ENCODE measurements at regions of chr19 and their contacts with region 1.

Region 1: DNA sequence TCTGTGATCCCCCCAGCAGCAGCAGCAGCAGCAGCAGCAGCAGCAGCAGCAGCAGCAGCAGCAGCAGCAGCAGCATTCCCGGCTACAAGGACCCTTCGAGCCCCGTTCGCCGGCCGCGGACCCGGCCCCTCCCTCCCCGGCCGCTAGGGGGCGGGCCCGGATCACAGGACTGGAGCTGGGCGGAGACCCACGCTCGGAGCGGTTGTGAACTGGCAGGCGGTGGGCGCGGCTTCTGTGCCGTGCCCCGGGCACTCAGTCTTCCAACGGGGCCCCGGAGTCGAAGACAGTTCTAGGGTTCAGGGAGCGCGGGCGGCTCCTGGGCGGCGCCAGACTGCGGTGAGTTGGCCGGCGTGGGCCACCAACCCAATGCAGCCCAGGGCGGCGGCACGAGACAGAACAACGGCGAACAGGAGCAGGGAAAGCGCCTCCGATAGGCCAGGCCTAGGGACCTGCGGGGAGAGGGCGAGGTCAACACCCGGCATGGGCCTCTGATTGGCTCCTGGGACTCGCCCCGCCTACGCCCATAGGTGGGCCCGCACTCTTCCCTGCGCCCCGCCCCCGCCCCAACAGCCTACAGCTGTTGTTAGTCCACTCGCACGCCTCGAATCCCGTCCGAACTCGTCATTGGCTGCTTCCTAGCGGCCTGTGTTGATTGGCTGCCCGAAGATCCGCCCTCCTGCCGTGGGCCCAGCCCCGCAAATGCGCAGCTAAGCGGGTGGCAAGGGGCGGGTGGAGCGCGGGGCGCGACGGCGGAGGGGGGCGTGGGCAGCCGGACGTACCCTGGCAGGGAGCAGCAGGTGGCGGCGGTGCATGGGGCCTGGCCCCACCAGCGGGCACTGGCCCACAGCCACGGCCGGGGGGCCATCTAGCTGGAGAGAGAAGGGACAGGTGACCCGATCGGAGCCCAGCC is 1.4 kb upstream of the SIX5 start:
- DNase-seq: peak; percentile 98
- H3K4me3 ChIP-seq: peak overlapping the region; percentile 50 to 83 (median 75)
- H3K27ac ChIP-seq: no peak overlapping the region
- H3K4me1 ChIP-seq: peaks cover 33% of the 10 kb centered on the region
- H3K27me3 ChIP-seq: no peaks in the 10 kb centered on the region
- CTCF ChIP-seq: peak; percentile 44 to 93

Region 2: DNA sequence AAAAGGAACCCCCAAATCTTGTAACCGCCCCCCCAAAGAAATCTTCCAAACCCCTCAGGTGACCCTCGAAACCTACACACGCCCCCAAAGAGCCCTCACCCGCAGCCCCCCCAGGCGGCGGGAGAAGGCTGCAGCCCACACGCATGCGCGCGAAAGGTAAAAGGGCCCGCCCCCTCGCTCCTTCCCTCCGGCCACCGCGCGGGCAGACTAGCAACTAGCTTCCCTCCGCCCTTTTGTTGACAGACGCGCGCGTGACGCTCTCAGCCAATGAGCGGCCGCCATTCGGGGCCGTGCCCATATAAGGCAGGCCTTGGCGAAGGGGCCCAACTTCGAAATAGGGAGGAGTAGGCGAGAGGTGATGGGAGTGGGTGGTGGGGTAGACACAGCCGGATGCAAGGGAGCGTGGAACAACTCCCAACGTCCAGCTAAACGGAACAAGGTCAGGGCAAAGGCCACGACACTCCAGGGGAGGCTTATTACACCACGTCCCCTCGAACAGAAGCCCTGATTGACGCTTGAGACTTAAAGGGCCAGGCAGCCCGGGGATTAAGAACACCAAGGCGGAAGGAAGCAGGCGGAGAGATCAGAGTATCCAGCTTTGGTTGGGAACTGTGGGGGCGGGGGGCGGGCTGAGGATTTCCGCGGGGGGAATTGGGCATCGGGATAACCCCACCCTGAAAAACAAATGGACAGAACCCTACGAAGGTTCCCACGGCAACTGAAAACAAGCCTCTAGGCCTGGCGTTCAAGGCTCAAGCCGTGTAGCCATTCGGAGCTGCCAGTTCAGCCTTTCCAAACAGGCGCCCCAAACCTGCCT is 53.1 kb before region 1 on chr19:
- CTCF ChIA-PET with region 1: no interaction called
- dilution Hi-C with region 1: no loop called
- in situ Hi-C with region 1: no loop called
- intact Hi-C with region 1: loop called (anchors 1 kb)
- DNase-seq: peak; percentile 97
- H3K4me3 ChIP-seq: peak overlapping the region; percentile 64 to 91 (median 65)
- H3K27ac ChIP-seq: peak overlapping the region; percentile 87
- H3K4me1 ChIP-seq: peaks cover 23% of the 10 kb centered on the region
- H3K27me3 ChIP-seq: no peaks in the 10 kb centered on the region
- CTCF ChIP-seq: peak; percentile 5 to 29

Region 3: GRCh38 chr19:45753546-45753945 is 16.9 kb before region 1 on chr19:
- CTCF ChIA-PET with region 1: no interaction called
- dilution Hi-C with region 1: no loop called
- in situ Hi-C with region 1: no loop called
- intact Hi-C with region 1: loop called (anchors 2 kb)
- DNase-seq: no peak
- H3K4me3 ChIP-seq: no peak overlapping the region
- H3K27ac ChIP-seq: no peak overlapping the region
- H3K4me1 ChIP-seq: peaks cover 5% of the 10 kb centered on the region
- H3K27me3 ChIP-seq: no peaks in the 10 kb centered on the region
- CTCF ChIP-seq: no peak

Region 4: DNA sequence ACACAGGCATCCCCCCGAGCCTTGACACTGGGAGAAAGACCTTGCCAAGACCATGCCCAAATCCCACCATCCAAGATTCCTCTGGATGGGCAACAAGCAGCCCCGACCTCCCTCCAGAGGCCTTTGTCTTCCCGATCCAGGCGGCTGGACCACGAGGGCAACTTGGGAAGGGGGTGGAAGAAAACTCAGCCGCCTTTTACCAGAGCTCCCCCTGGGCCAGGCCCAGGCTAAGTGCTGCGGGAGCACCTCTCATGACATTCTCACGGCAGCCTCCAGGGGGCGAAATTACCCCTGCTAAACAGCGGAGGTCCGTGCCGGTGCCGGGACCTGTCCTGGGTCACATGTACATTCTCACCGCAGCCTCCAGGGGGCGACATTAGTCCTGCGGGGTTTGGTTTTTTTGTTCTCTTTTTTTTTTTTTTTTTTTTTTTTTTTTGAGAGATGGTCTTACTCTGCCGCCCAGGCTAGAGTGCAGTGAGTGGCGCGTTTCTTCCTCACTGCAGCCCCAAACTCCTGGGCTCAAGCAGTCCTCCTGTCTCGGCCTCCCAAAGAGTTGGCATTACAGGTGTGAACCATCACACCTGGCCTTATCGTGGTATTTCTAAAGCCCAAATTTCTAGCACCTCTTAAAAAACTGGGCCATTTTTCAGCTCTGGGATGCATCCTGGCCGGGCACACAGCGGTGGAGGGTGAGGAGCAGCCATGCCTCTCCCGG is 46.7 kb after region 1 on chr19:
- CTCF ChIA-PET with region 1: interaction called, 12 read pairs
- dilution Hi-C with region 1: no loop called
- in situ Hi-C with region 1: no loop called
- intact Hi-C with region 1: no loop called
- DNase-seq: peak; percentile 75
- H3K4me3 ChIP-seq: no peak overlapping the region
- H3K27ac ChIP-seq: no peak overlapping the region
- H3K4me1 ChIP-seq: peaks cover 14% of the 10 kb centered on the region
- H3K27me3 ChIP-seq: no peaks in the 10 kb centered on the region
- CTCF ChIP-seq: peak; percentile 96 to 98

Region 5: DNA sequence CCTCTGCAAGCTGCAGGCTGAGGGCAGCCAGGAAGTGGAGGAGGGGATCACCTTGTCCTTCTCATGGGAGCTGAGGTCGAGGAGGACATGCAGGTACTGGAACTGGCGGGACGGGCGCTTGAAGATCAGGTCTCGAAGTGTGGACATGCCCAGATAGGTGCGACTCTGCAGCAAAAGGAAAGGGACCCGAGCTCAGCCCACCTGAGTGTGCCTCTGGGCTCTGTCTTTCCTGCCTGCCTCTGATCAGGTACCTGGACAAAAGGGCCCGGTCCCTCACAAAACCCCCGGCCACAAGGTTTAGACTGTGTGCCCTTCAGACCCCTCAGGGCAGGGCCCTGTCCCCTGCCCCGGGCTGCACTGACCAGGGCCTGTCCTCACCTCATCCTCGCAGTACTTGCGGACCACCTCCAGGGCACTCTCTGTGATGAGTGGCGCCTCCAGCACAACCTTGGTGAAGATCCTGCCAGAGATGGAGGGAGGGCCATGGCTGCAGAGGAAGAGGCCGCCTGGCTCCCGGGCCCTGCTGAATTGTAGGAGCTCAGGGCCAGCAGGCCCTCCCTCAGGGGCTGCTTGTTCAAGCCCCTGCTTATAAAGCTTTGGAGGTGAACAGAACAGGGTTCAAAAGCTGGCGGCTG is 57.1 kb after region 1 on chr19:
- CTCF ChIA-PET with region 1: no interaction called
- dilution Hi-C with region 1: no loop called
- in situ Hi-C with region 1: no loop called
- intact Hi-C with region 1: no loop called
- DNase-seq: no peak
- H3K4me3 ChIP-seq: no peak overlapping the region
- H3K27ac ChIP-seq: no peak overlapping the region
- H3K4me1 ChIP-seq: no peaks in the 10 kb centered on the region
- H3K27me3 ChIP-seq: no peaks in the 10 kb centered on the region
- CTCF ChIP-seq: no peak

Region 6: DNA sequence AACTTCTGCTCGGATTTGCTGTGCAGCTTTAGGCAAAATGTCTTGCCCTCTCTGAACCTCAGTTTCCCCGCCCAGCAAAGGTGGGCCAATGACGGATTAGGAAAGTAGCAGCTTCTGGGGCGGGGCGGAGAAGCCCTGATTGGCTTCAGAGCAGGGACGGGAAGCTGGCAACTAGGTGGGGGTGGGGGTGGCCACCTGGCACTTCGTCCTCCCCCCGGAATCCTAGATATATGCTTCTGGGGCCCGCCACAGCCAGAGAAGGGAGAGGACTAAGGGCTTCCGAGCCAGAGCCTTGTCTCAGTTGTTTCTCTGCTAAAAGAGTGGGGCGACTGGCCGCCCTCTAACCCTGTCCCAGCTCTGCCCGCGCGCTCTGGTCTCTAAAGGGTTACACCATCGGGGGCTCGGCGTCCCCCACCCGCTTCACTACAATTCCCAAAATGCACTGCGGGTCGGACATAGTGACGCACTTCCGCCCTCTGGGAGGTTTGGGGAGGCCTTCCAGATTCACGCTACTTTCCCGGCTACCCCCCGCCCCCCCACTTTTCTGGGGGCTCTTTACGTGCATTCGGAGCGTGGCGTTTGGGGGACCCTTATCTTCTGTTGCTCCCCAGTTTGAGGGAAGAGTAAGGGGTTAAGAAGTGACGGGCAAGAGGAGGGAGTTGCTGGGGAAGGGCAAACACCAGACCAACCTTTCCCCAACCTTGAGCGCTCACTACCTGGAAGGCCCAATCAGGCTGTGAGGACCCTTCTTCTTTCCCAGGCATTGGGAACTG is 116.2 kb after region 1 on chr19:
- CTCF ChIA-PET with region 1: no interaction called
- dilution Hi-C with region 1: no loop called
- in situ Hi-C with region 1: no loop called
- intact Hi-C with region 1: loop called (anchors 2 kb)
- DNase-seq: peak; percentile 95
- H3K4me3 ChIP-seq: peak overlapping the region; percentile 54 to 74 (median 61)
- H3K27ac ChIP-seq: peak overlapping the region; percentile 73
- H3K4me1 ChIP-seq: peaks cover 32% of the 10 kb centered on the region
- H3K27me3 ChIP-seq: no peaks in the 10 kb centered on the region
- CTCF ChIP-seq: no peak